Activated CD4-positive, alpha-beta T cell treated with anti-CD3 and anti-CD28 coated beads, Interleukin-2, amount 10 ng/mL, durations not matched to agents 24 days and 14 days (primary cell): ENCODE measurements at regions of chr5 and their contacts with region 1.

Region 1: DNA sequence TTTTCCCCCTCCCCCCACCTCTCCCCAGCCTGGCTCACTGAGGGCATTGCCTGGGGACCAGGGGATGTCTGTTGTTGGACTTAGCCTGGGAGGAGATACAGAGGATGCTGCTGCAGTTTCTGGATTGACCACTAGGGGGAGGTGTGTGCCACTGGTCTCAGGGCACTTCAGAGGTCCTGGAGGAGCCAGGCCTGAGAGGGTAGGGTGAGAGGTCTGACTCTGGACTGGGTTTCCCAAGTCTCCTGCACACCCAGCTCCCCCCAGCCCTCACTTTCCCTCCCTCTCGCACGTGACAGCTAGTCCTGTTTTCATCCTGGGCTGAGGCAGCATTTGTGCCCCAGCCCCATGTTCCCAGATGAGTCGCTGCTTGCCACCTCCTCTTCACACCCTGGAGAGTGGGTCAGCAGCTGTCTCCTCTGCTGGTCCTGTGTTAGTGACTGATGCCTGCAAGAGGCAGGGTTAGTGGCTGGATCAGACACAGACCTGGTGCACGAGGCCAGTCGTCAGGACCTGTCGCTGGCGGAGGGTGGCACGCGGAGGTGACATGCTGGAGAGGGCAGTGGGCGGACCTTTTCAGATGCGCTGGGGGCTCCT is 4.4 kb downstream of the IL3 start:
- DNase-seq: peak; percentile 95
- H3K4me3 Mint-ChIP-seq: no peak overlapping the region
- H3K27ac Mint-ChIP-seq: peak overlapping the region; percentile 66
- H3K4me1 Mint-ChIP-seq: peaks cover 63% of the 10 kb centered on the region
- H3K27me3 Mint-ChIP-seq: no peaks in the 10 kb centered on the region

Region 2: GRCh38 chr5:131589510-131590348 is 475.1 kb before region 1 on chr5:
- intact Hi-C with region 1: loop called (anchors 2 kb)
- DNase-seq: peak; percentile 77
- H3K4me3 Mint-ChIP-seq: no peak overlapping the region
- H3K27ac Mint-ChIP-seq: no peak overlapping the region
- H3K4me1 Mint-ChIP-seq: peaks cover 31% of the 10 kb centered on the region
- H3K27me3 Mint-ChIP-seq: no peaks in the 10 kb centered on the region

Region 3: GRCh38 chr5:131810510-131811249 is 254.2 kb before region 1 on chr5:
- intact Hi-C with region 1: loop called (anchors 5 kb)
- DNase-seq: peak; percentile 65
- H3K4me3 Mint-ChIP-seq: no peak overlapping the region
- H3K27ac Mint-ChIP-seq: no peak overlapping the region
- H3K4me1 Mint-ChIP-seq: no peaks in the 10 kb centered on the region
- H3K27me3 Mint-ChIP-seq: peaks cover 17% of the 10 kb centered on the region

Region 4: GRCh38 chr5:132134384-132134783 is 69.5 kb after region 1 on chr5:
- intact Hi-C with region 1: loop called (anchors 2 kb)
- DNase-seq: no peak
- H3K4me3 Mint-ChIP-seq: no peak overlapping the region
- H3K27ac Mint-ChIP-seq: no peak overlapping the region
- H3K4me1 Mint-ChIP-seq: peaks cover 27% of the 10 kb centered on the region
- H3K27me3 Mint-ChIP-seq: peaks cover 26% of the 10 kb centered on the region

Region 5: GRCh38 chr5:132238169-132238744 is 173.4 kb after region 1 on chr5:
- intact Hi-C with region 1: loop called (anchors 2 kb)
- DNase-seq: peak; percentile 93
- H3K4me3 Mint-ChIP-seq: no peak overlapping the region
- H3K27ac Mint-ChIP-seq: no peak overlapping the region
- H3K4me1 Mint-ChIP-seq: peaks cover 6% of the 10 kb centered on the region
- H3K27me3 Mint-ChIP-seq: peaks cover 7% of the 10 kb centered on the region

Region 6: GRCh38 chr5:132386644-132387286 is 321.9 kb after region 1 on chr5:
- intact Hi-C with region 1: loop called (anchors 5 kb)
- DNase-seq: peak; percentile 93
- H3K4me3 Mint-ChIP-seq: no peak overlapping the region
- H3K27ac Mint-ChIP-seq: no peak overlapping the region
- H3K4me1 Mint-ChIP-seq: peaks cover 51% of the 10 kb centered on the region
- H3K27me3 Mint-ChIP-seq: no peaks in the 10 kb centered on the region